Activated naive CD4-positive, alpha-beta T cell treated with anti-CD3 and anti-CD28 coated beads for 36 hours (primary cell): ENCODE measurements at regions of chr17 and their contacts with region 1.

Region 1: DNA sequence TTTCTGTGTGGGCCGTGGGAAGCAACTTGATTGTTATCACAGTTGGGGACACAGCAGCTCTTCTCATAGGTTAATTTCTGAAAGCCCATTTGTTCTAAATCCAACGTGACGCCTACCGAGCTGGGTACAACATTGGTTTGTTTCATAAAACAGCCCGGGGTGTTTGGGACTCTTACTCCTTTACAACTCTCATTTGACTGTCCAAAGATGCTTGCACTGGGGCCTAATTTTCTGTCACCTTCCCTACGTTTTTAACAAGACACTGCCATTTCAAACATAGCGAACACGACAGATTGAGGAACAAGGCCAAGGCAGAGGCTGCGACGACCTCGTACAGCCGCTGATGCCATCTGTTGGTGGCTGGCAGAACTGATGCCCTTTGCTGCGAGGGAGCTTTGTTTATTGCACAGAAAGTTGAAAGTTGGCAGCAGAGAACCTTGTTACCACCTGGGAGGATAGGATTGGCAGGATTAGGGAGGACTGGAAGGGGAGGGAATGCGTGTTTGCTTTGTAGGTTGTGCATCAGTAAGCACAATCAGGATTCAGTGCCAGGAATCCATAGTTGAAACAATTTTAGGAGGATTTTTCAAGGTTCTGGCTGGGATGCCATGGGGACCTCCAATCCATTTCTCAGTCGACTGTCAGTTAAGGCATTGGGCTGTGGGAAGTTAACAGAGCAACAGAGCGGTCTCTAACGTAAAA is 98.3 kb downstream of the PITPNC1 start:
- DNase-seq: peak; percentile 95
- H3K4me3 Mint-ChIP-seq: peak overlapping the region; percentile 60
- H3K27ac Mint-ChIP-seq: peak overlapping the region; percentile 99
- H3K4me1 Mint-ChIP-seq: peaks cover 60% of the 10 kb centered on the region
- H3K27me3 Mint-ChIP-seq: no peaks in the 10 kb centered on the region

Region 2: GRCh38 chr17:67082107-67082506 is 393.3 kb before region 1 on chr17:
- CTCF ChIA-PET with region 1: no interaction called
- intact Hi-C with region 1: no loop called
- DNase-seq: no peak
- H3K4me3 Mint-ChIP-seq: no peak overlapping the region
- H3K27ac Mint-ChIP-seq: no peak overlapping the region
- H3K4me1 Mint-ChIP-seq: peaks cover 22% of the 10 kb centered on the region
- H3K27me3 Mint-ChIP-seq: no peaks in the 10 kb centered on the region

Region 3: DNA sequence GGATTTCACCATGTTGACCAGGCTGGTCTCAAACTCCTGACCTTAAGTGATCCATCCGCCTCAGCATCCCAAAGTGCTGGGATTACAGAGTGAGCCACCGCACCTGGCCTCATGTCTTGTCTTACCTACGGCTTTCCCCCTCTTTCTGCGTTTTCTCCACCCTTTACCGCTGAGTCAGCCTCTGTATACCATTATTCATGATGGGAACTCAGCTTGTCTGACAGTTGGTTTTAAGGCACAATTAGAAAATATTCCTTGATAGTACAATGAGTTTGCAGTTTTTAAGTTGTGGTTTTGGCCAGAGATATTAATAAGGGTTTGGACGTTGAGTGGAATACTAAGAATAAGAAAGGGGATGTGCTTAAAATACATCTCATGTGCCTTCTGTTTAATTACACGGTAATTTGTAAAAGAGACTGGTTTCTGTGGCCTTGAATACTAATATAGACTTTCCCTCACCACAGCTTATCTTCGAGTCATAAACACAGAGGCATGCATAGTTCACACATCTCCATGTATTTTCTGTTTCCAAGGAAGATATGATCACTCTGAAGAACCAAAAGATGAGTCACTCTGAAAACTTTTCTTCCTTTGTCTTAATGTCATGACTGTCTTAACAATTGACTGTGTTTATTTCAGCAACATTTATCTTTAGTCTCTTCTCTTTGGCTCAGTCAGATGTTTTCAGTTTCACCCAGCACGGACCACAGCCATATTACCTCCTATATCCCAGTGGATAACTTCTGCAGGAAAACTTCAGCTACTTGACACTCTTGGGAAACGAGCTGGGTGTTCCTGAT is 43.9 kb before region 1 on chr17:
- CTCF ChIA-PET with region 1: interaction called, 59 read pairs
- intact Hi-C with region 1: loop called (anchors 1 kb)
- DNase-seq: peak; percentile 46
- H3K4me3 Mint-ChIP-seq: peak overlapping the region; percentile 25
- H3K27ac Mint-ChIP-seq: peak overlapping the region; percentile 95
- H3K4me1 Mint-ChIP-seq: peaks cover 76% of the 10 kb centered on the region
- H3K27me3 Mint-ChIP-seq: no peaks in the 10 kb centered on the region

Region 4: DNA sequence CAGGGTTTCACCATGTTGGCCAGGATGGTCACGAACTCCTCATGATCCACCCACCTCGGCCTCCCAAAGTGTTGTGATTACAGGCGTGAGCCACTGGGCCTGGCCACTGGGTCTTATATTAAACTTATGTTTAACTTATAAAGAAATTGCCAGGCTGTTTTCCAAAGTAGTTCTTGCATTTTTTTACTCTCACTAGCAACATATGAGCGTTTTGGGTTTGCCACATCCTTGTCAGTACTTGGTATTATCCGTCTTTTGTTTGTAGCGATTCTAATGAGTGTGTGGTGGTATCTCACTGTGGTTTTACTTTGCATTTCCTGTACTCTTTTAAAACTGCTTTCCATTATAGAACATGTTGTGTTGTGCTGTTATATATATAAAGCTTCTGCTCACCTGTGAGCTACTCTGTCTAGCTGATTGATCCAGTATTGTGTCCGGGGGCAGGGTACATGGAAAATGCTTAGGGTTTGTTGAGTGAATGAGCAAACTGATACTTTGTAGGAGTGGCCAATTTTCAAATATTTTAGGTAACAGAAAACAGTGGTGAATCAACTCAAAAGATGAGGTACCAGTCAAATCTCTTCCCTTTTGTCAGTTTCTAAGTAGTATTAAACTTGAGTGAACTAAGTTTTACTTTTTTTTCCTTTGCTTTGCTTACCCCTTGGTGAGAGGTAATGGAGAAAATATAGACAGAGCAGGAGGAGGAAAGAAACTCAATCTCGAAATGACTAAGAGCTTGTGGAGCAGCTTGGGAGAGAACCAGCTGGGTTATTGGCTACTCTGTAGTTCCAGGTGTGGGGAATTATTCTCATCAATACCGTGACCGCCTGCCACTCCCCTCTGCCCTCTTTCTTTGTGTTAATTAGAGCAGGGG is 22.5 kb before region 1 on chr17:
- CTCF ChIA-PET with region 1: interaction called, 20 read pairs
- intact Hi-C with region 1: loop called (anchors 1 kb)
- DNase-seq: peak; percentile 65
- H3K4me3 Mint-ChIP-seq: peak overlapping the region; percentile 53
- H3K27ac Mint-ChIP-seq: peak overlapping the region; percentile 91
- H3K4me1 Mint-ChIP-seq: peaks cover 91% of the 10 kb centered on the region
- H3K27me3 Mint-ChIP-seq: no peaks in the 10 kb centered on the region

Region 5: GRCh38 chr17:67575325-67575724 is 99.9 kb after region 1 on chr17:
- CTCF ChIA-PET with region 1: no interaction called
- intact Hi-C with region 1: no loop called
- DNase-seq: no peak
- H3K4me3 Mint-ChIP-seq: no peak overlapping the region
- H3K27ac Mint-ChIP-seq: no peak overlapping the region
- H3K4me1 Mint-ChIP-seq: peaks cover 12% of the 10 kb centered on the region
- H3K27me3 Mint-ChIP-seq: no peaks in the 10 kb centered on the region

Region 6: DNA sequence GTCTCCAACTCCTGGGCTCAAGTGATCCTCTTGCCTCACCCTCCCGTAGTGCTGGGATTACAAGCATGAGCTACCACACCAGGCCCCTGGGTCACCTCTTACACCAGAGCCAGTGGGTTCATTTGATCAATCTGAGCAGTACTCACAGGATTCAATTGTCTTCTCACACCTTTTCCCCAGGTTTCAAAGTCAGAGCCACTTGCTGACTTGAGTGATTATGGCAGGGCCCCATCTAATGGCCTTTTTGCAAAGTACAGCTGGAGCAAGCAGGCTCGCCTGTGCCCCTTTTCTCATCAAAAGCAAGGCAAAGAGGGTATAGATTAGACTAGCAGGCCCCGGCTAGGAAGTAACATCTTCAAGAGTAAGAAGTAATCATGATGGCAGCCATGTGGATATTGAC is 127.6 kb after region 1 on chr17:
- CTCF ChIA-PET with region 1: no interaction called
- intact Hi-C with region 1: loop called (anchors 1 kb)
- DNase-seq: peak; percentile 72
- H3K4me3 Mint-ChIP-seq: no peak overlapping the region
- H3K27ac Mint-ChIP-seq: no peak overlapping the region
- H3K4me1 Mint-ChIP-seq: peaks cover 14% of the 10 kb centered on the region
- H3K27me3 Mint-ChIP-seq: no peaks in the 10 kb centered on the region